Activated T-helper 1 cell treated with anti-CD3 and anti-CD28 coated beads, Interleukin-12 subunit alpha, Interleukin-12 subunit beta, Interleukin-2, Interleukin-4 antibody, amounts not matched to agents 30 ng/mL and 10 ng/mL and 1 ng/mL, durations not matched to agents 14 hours and 24 hours and 36 hours (primary cell): ENCODE measurements at regions of chr12 and their contacts with region 1.

Region 1: DNA sequence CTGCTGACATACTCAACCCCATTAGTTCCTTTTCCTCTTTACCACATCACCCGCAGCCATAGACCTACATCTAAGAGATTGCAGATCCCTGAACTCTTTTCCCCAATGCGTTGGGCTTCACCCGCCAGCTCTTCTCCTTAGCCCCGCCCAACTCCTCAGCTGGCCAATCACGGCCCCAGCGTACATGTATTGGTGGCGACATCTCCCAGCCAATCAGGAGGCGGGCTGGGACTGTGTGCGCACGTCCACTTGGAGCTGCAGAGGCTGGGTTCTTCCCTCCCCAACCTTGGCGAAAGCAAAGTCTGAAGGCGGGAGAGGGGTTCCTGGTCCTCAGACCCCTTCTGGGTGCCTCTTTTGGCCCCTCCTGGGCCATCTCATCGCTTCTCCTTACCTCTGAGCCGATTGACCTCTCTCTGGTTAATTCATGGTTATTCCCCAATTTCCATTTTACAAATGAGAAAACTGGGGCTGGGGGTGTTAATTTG is 11.0 kb downstream of the PDE1B start:
- DNase-seq: peak; percentile 86
- H3K4me3 Mint-ChIP-seq: peak overlapping the region; percentile 78
- H3K27ac Mint-ChIP-seq: peak overlapping the region; percentile 91
- H3K4me1 Mint-ChIP-seq: peaks cover 47% of the 10 kb centered on the region
- H3K27me3 Mint-ChIP-seq: no peaks in the 10 kb centered on the region

Region 2: GRCh38 chr12:54475537-54475936 is 84.9 kb before region 1 on chr12:
- intact Hi-C with region 1: no loop called
- DNase-seq: no peak
- H3K4me3 Mint-ChIP-seq: no peak overlapping the region
- H3K27ac Mint-ChIP-seq: no peak overlapping the region
- H3K4me1 Mint-ChIP-seq: no peaks in the 10 kb centered on the region
- H3K27me3 Mint-ChIP-seq: peaks cover 16% of the 10 kb centered on the region

Region 3: GRCh38 chr12:54526812-54527630 is 33.4 kb before region 1 on chr12:
- intact Hi-C with region 1: loop called (anchors 5 kb)
- DNase-seq: no peak
- H3K4me3 Mint-ChIP-seq: no peak overlapping the region
- H3K27ac Mint-ChIP-seq: no peak overlapping the region
- H3K4me1 Mint-ChIP-seq: peaks cover 10% of the 10 kb centered on the region
- H3K27me3 Mint-ChIP-seq: no peaks in the 10 kb centered on the region

Region 4: GRCh38 chr12:54549774-54550451 is 10.5 kb before region 1 on chr12:
- intact Hi-C with region 1: loop called (anchors 1 kb)
- DNase-seq: peak; percentile 1
- H3K4me3 Mint-ChIP-seq: peak overlapping the region; percentile 84
- H3K27ac Mint-ChIP-seq: no peak overlapping the region
- H3K4me1 Mint-ChIP-seq: peaks cover 48% of the 10 kb centered on the region
- H3K27me3 Mint-ChIP-seq: peaks cover 7% of the 10 kb centered on the region

Region 5: DNA sequence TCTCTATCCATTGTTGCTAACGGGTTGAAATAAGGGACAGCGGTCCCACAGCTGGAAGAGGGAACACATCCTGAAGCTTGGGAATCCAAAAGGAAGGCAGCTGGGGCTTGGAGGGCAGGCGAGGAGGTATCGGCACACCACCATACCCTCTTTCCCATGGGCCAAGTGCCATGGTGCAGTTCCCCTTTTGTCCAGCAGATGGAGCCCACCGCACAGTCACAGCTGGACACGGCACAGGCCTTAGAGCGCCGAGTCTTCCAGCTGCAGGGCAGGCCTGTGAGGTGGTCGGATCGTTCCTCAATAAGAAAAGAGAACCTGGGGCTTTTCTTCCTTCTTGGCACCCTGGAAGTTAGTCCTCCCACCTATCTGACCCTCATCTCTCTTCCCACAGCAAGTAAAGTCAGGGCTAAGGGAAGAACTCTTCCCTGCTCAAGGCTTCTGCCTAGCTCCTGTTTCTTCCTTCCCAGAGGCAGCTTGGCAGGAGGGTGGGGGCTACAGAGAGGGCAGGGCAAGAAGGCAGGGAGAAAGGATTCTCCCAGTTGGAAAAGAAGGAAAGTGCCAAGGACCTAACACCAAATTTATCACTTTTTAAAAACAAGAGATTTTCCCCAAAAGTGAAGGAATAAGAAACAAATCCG is 19.4 kb after region 1 on chr12:
- intact Hi-C with region 1: loop called (anchors 1 kb)
- DNase-seq: peak; percentile 66
- H3K4me3 Mint-ChIP-seq: no peak overlapping the region
- H3K27ac Mint-ChIP-seq: no peak overlapping the region
- H3K4me1 Mint-ChIP-seq: no peaks in the 10 kb centered on the region
- H3K27me3 Mint-ChIP-seq: peaks cover 17% of the 10 kb centered on the region

Region 6: GRCh38 chr12:55188974-55189556 is 628.6 kb after region 1 on chr12:
- intact Hi-C with region 1: no loop called
- DNase-seq: peak; percentile 33
- H3K4me3 Mint-ChIP-seq: no peak overlapping the region
- H3K27ac Mint-ChIP-seq: no peak overlapping the region
- H3K4me1 Mint-ChIP-seq: no peaks in the 10 kb centered on the region
- H3K27me3 Mint-ChIP-seq: peaks cover 11% of the 10 kb centered on the region

Region 7: GRCh38 chr12:55715833-55716581 is 1155.6 kb after region 1 on chr12 and contains the start of gene BLOC1S1:
- intact Hi-C with region 1: loop called (anchors 10 kb)
- DNase-seq: peak; percentile 90
- H3K4me3 Mint-ChIP-seq: peak within 1 kb of the TSS; percentile 91
- H3K27ac Mint-ChIP-seq: peak within 1 kb of the TSS; percentile 93
- H3K4me1 Mint-ChIP-seq: peaks cover 34% of the 10 kb centered on the region
- H3K27me3 Mint-ChIP-seq: peaks cover 16% of the 10 kb centered on the region
- total RNA-seq, gene BLOC1S1: 62.5 and 64.8 TPM in 2 replicates